Activated T-helper 2 cell treated with anti-CD3 and anti-CD28 coated beads, Interferon-gamma antibody, Interleukin-2, Interleukin-4, amounts not matched to agents 10 μg/mL and 5 μg/mL and 100 μg/mL, durations not matched to agents 14 hours and 24 hours and 36 hours (primary cell): ENCODE measurements at regions of chrX and their contacts with region 1.

Region 1: GRCh38 chrX:149611623-149612175 is 16.6 kb upstream of the HSFX2 start:
- DNase-seq: no peak
- H3K4me3 Mint-ChIP-seq: no peak overlapping the region
- H3K27ac Mint-ChIP-seq: no peak overlapping the region
- H3K4me1 Mint-ChIP-seq: no peaks in the 10 kb centered on the region
- H3K27me3 Mint-ChIP-seq: no peaks in the 10 kb centered on the region

Region 2: GRCh38 chrX:149539283-149540130 is 72.2 kb before region 1 on chrX:
- intact Hi-C with region 1: loop called (anchors 10 kb)
- DNase-seq: peak; percentile 83
- H3K4me3 Mint-ChIP-seq: peak overlapping the region; percentile 81
- H3K27ac Mint-ChIP-seq: peak overlapping the region; percentile 76
- H3K4me1 Mint-ChIP-seq: peaks cover 4% of the 10 kb centered on the region
- H3K27me3 Mint-ChIP-seq: no peaks in the 10 kb centered on the region

Region 3: GRCh38 chrX:149570672-149571071 is 41.0 kb before region 1 on chrX:
- intact Hi-C with region 1: no loop called
- DNase-seq: no peak
- H3K4me3 Mint-ChIP-seq: no peak overlapping the region
- H3K27ac Mint-ChIP-seq: no peak overlapping the region
- H3K4me1 Mint-ChIP-seq: peaks cover 23% of the 10 kb centered on the region
- H3K27me3 Mint-ChIP-seq: no peaks in the 10 kb centered on the region

Region 4: GRCh38 chrX:149950681-149951080 is 339.0 kb after region 1 on chrX:
- intact Hi-C with region 1: no loop called
- DNase-seq: no peak
- H3K4me3 Mint-ChIP-seq: no peak overlapping the region
- H3K27ac Mint-ChIP-seq: no peak overlapping the region
- H3K4me1 Mint-ChIP-seq: no peaks in the 10 kb centered on the region
- H3K27me3 Mint-ChIP-seq: no peaks in the 10 kb centered on the region